Psoas muscle (tissue), 8 donors: ENCODE measurements at regions of chr2 and their contacts with region 1.

Region 1: GRCh38 chr2:68709421-68709911 is 25.1 kb upstream of the ARHGAP25 start:
- DNase-seq: no peak
- ATAC-seq: peak in 1 of 4 donors; percentile 53
- H3K4me3 ChIP-seq: no peak overlapping the region
- H3K27ac ChIP-seq: no peak overlapping the region
- H3K4me1 ChIP-seq: no peaks in the 10 kb centered on the region
- H3K27me3 ChIP-seq: no peaks in the 10 kb centered on the region
- CTCF ChIP-seq: peak; percentile 52

Region 2: DNA sequence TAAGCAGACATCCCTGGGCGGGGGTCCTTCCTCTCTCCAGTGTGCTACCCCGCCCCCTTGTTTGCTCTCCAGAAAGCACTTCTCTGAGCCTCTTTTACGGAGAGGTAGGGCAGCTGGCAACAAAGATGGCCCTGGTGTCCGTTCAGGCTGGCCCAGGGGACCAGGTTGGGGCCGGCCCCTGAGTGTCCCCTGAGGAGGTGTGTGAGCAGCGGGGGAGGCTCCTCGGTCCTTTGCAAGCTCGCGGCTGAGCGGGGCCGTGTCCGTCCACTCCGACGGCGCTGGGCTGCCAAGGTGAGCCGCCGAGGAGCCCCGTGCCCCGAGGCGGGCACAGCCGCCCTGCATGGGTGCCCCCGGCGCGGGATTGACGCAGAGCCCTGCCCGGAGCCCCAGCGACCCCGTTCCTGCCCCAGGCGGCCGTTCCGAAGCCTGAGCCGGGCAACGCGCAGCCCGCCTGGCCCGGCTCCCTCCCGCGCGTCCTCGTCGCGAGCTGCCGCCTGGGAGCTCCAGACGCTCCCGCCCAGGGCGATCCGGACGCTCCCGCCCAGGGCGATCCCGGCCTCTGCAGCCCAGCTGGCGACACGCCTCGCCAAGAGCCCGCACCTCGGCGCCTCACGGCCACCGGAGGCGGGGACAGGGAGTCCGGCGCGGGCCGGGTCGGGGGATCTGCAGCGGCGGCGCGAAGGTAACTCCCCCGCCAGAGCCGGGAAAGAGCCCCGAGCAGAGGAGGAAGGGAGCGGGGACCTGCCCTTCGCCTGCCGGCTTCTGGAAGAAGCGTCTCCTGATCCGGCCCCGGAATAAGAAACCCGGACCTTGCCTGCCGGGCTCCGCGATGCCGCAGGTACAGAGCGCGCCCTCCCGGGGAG is 66.2 kb before region 1 on chr2 and contains the start of gene PROKR1:
- intact Hi-C with region 1: no loop called
- DNase-seq: peak; percentile 28 to 50
- ATAC-seq: peak; percentile 48 to 56 (median 50)
- H3K4me3 ChIP-seq: peak within 1 kb of the TSS; percentile 64
- H3K27ac ChIP-seq: no peak within 1 kb of the TSS
- H3K4me1 ChIP-seq: no peaks in the 10 kb centered on the region
- H3K27me3 ChIP-seq: peaks cover 0 to 78% (median 18%) of the 10 kb centered on the region in 3 donors
- CTCF ChIP-seq: no peak
- total RNA-seq, gene PROKR1: not detected

Region 3: DNA sequence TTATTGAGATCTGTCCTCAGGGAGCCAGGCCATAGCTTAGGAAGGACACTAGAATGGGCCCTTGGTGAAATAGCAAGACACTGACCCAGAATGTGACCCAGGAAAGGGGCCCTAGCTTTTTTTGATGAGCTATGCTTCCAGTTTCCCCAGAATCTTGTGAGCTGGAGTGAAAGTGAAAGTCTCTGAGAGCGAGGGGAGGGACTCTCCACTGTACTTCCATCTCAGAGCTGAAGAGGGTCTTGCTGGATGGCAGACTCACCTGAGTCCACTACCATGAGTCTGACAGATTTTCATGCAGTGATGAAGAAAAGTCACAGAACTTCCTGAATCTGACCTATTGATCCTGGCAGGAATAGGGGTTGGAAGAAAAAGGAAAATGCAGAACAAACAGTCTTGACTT is 28.2 kb after region 1 on chr2:
- intact Hi-C with region 1: loop called in 1 of 2 experiments (anchors 1 kb)
- DNase-seq: no peak
- ATAC-seq: no peak
- H3K4me3 ChIP-seq: no peak overlapping the region
- H3K27ac ChIP-seq: no peak overlapping the region
- H3K4me1 ChIP-seq: no peaks in the 10 kb centered on the region
- H3K27me3 ChIP-seq: no peaks in the 10 kb centered on the region
- CTCF ChIP-seq: no peak